ENCODE measurements at regions of chr15 and their contacts with region 1.

Region 1: DNA sequence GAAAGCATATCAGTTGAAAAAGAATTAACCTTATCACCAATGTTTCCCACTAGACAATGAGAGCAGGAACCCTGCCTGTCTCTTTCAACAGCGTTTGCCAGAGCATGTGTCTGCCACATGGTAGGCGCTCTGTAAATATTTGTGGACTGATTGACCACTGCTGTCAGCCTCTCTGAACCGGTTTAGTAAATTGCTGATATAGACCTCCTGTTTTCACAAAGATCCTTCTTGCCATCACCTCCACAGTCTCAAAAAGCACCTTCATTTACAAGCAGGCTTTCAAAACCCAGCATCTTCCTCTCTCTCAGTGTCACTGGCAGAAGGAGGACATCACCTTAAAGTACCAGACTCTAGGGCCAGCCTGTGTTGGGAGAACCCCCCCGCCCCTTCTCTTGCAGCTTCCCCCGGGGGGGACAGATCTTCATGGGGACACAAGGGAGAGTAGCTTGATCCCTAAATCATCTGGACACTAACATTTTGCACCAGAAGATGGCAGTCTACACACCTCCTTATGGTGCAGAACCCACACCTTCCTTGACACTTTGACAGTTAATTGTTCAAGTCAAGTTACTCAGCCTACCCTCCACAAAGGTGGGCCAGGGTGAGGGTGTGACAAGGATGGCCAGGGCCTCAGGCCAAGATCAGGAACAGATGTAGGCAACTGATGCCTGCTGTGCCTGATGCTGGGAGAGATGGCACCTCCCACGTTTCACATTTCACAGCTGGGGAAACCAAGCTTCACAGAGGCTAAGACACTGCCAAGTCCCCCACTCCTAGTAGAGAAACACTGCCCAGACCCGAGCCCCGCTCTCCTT is 37.8 kb upstream of the USP3 start:
- DNase-seq: peak; percentile 72
- H3K4me3 ChIP-seq: no peak overlapping the region
- H3K27ac ChIP-seq: no peak overlapping the region
- H3K4me1 ChIP-seq: peaks cover 9 to 14% of the 10 kb centered on the region in 2 experiments; a peak in 2 of 4 replicates
- H3K27me3 ChIP-seq: no peaks in the 10 kb centered on the region
- CTCF ChIP-seq: peak; percentile 75
- EP300 ChIP-seq: no peak
- RAD21 ChIP-seq: peak; percentile 65

Region 2: GRCh38 chr15:63381301-63382204 is 85.0 kb before region 1 on chr15 and contains the start of gene CA12:
- CTCF ChIA-PET with region 1: no interaction called
- POLR2A ChIA-PET with region 1: no interaction called
- DNase-seq: peak; percentile 65
- H3K4me3 ChIP-seq: peak within 1 kb of the TSS; percentile 56 to 74
- H3K27ac ChIP-seq: peak within 1 kb of the TSS in 1 of 2 experiments; percentile 60; a peak in 1 of 4 replicates
- H3K4me1 ChIP-seq: peaks cover 15 to 26% of the 10 kb centered on the region in 2 experiments
- H3K27me3 ChIP-seq: no peaks in the 10 kb centered on the region
- CTCF ChIP-seq: no peak
- EP300 ChIP-seq: no peak
- RAD21 ChIP-seq: no peak
- polyA plus RNA-seq, gene CA12: 39.4 and 44.3 TPM in 2 replicates

Region 3: GRCh38 chr15:63414474-63415120 is 52.0 kb before region 1 on chr15:
- CTCF ChIA-PET with region 1: interaction called, 10 read pairs
- POLR2A ChIA-PET with region 1: no interaction called
- DNase-seq: no peak
- H3K4me3 ChIP-seq: no peak overlapping the region
- H3K27ac ChIP-seq: no peak overlapping the region
- H3K4me1 ChIP-seq: peaks cover 0 to 5% of the 10 kb centered on the region in 2 experiments; a peak in 1 of 4 replicates
- H3K27me3 ChIP-seq: no peaks in the 10 kb centered on the region
- CTCF ChIP-seq: no peak
- EP300 ChIP-seq: no peak
- RAD21 ChIP-seq: no peak

Region 4: DNA sequence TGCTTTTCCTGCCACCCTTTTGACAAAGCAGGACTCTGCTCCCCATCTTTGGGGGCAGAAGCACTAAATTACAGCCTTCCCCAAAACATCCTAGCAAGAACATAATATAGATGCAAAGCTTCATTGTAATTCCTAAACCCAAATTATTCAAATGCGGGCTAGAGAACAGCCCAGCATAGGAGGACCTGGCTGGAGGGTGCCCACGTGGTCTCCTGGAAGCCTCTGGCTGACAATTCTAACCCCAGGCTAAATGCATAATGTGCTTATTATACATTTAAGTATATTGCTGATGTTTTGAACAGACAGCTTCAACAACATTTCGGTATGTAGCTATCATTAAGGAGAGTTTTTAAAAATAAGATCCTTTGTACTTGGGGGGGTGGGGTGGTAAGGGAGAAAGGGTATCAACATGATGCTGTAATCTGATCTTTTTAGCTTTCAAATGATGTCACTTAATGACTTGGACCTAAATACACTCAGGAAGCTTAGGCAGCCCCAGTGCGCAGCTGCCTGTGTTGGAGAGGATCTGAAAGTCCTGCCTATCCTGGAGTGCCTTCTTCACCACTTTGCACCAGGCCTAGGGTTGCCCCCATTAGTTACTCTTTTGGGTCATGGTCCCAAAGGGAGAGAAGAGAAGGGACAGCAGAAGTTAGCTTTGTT is 19.4 kb before region 1 on chr15:
- CTCF ChIA-PET with region 1: interaction called, 13 read pairs
- POLR2A ChIA-PET with region 1: no interaction called
- DNase-seq: no peak
- H3K4me3 ChIP-seq: no peak overlapping the region
- H3K27ac ChIP-seq: no peak overlapping the region
- H3K4me1 ChIP-seq: peaks cover 0 to 13% of the 10 kb centered on the region in 2 experiments; a peak in 2 of 4 replicates
- H3K27me3 ChIP-seq: no peaks in the 10 kb centered on the region
- CTCF ChIP-seq: no peak
- EP300 ChIP-seq: no peak
- RAD21 ChIP-seq: no peak

Region 5: DNA sequence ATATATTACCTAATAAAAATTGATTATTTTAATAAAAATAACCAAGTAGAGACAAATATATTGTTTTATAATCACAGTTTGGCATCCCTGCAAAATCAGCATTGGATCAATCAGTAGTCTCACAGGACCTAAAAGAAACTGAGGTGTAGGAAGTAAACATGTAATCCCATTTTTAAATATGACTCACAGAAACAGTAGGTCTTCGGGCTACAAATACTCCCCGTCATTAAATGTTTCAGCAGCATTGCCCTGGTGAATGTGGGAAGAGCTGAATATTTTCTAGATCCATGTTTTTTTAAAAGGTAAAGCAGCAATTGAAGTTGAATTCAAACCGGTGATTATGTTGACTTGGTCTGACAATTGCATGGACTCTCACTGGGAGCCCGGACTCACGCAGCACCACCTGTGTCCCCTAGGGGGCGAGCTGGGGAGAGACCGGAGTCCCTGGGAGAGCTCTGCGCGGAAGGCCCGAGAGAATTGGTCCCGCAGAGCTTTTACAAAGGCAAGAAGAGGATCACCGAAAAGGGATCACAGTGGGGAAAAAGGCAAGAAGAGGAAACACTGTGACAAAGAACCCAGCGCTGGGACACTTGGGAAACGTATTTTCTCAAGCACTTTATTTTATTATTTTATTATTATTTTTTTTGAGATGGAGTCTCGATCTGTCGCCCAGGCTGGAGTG is 20.6 kb after region 1 on chr15:
- CTCF ChIA-PET with region 1: interaction called, 22 read pairs
- POLR2A ChIA-PET with region 1: no interaction called
- DNase-seq: peak; percentile 86
- H3K4me3 ChIP-seq: peak overlapping the region in 1 of 2 experiments; percentile 41; a peak in 1 of 4 replicates
- H3K27ac ChIP-seq: no peak overlapping the region
- H3K4me1 ChIP-seq: peaks cover 0 to 5% of the 10 kb centered on the region in 2 experiments; a peak in 1 of 4 replicates
- H3K27me3 ChIP-seq: no peaks in the 10 kb centered on the region
- CTCF ChIP-seq: peak; percentile 87
- EP300 ChIP-seq: no peak
- RAD21 ChIP-seq: peak; percentile 75

Region 6: DNA sequence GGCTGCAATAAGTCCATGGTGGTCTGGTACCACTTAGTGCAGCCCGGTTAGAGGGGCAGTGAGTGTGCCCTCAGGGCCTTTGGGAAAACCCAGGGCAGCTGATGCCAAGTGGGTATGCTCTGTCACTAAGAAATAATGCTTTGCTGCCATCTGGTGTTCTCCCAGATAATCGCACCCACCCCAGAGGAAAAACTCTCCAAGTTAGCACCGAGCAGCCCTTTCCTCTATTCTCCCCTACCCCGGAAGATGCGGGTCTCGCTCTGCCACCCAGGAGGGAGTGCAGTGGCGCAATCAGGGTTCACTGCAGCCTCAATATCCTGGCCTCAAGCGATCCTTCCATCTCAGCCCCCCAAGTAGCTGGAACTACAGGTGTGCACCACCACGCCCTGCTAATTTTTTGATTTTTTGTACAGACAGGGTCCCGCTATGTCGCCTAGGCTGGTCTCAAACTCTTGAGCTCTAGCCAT is 601.0 kb after region 1 on chr15:
- CTCF ChIA-PET with region 1: interaction called, 10 read pairs
- POLR2A ChIA-PET with region 1: no interaction called
- DNase-seq: peak; percentile 90
- H3K4me3 ChIP-seq: no peak overlapping the region; a peak in 1 of 4 replicates
- H3K27ac ChIP-seq: no peak overlapping the region
- H3K4me1 ChIP-seq: peaks cover 0 to 14% of the 10 kb centered on the region in 2 experiments; a peak in 2 of 4 replicates
- H3K27me3 ChIP-seq: no peaks in the 10 kb centered on the region
- CTCF ChIP-seq: peak; percentile 76
- EP300 ChIP-seq: peak in 1 of 2 experiments; percentile 63; a peak in 2 of 4 replicates
- RAD21 ChIP-seq: peak; percentile 95

Measured in SK-N-SH (cell line).